ENCODE measurements at regions of chr20 and their contacts with region 1.

Region 1: DNA sequence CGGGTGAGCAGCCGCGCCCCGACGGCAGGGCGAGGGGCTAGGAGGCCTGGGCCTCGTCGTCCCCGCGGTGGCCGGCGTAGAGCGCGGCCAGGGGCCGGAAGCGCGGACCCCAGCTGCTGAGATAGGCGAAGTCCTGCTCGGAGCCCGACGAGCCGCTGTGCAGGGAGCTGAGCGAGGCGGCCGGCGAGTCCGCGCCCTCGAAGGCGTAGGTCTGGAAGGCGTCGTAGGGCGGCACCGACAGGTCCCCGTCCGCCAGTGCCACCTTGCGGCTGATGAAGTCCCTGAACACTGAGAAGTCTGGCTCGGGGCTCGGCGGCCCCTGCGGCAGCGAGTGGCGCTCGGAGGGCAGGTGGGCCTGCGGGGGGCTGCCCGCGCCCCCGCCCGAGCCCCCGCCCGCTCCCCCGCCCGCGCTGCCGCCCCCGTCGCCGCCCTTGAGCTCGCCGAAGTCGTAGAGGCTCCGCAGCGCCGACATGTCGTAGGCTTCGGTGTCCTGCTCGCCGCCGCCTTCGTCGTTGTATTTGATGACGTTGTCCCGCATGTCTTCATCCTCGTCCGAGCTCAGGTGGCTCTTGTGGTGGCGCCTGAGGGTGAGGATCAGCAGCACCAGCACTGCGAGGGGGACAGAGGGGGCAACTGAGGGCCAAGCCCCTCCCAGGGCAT is 56.5 kb downstream of the CD40 start:
- DNase-seq: peak; percentile 44
- H3K4me3 ChIP-seq: no peak overlapping the region
- H3K27ac ChIP-seq: no peak overlapping the region
- H3K4me1 ChIP-seq: no peaks in the 10 kb centered on the region
- H3K27me3 ChIP-seq: peaks cover 18 to 33% of the 10 kb centered on the region in 2 experiments
- CTCF ChIP-seq: peak; percentile 50 to 85
- POLR2A ChIP-seq: no peak

Region 2: DNA sequence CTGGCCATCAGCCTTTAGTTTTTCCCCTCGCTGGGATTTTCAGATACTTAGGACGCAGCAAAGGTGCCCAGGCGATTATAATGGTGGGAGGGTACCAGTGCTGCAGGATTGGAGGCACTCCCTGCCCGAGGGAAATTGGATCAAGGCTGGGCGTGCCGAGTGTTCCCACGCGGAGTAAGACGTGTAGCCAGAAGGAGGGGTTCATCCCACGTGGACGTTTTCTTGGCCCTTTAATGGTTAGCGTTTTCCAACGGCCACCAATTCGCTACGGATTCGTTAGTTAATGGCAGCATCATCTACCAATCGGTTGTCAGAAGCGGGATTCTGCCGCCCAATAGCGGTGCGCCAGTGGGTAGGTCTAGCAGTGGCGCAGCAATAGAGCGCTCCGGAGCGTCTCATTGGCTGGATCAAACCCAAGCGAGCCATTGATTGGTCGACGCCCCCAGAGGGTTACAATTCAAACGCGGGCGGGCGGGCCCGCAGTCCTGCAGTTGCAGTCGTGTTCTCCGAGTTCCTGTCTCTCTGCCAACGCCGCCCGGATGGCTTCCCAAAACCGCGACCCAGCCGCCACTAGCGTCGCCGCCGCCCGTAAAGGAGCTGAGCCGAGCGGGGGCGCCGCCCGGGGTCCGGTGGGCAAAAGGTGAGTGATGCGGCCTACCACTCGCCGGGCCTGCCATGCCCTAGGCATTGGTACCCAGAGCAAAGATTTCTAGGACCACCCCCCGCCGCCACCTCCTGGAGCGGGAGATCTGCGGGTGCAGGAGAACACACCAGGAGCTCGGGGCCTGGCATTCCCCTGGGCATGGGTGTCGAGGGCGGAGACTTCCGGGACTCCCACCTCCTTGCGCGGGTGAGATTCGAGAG is 362.2 kb before region 1 on chr20 and contains the start of gene UBE2C:
- CTCF ChIA-PET with region 1: no interaction called
- POLR2A ChIA-PET with region 1: no interaction called
- dilution Hi-C with region 1: no loop called
- intact Hi-C with region 1: no loop called
- DNase-seq: peak; percentile 100
- H3K4me3 ChIP-seq: peak within 1 kb of the TSS; percentile 59 to 96 (median 90)
- H3K27ac ChIP-seq: peak within 1 kb of the TSS; percentile 41
- H3K4me1 ChIP-seq: peaks cover 16% of the 10 kb centered on the region
- H3K27me3 ChIP-seq: no peaks in the 10 kb centered on the region
- CTCF ChIP-seq: no peak
- POLR2A ChIP-seq: peak; percentile 50
- total RNA-seq, gene UBE2C: 108 and 129 TPM in 2 replicates

Region 3: DNA sequence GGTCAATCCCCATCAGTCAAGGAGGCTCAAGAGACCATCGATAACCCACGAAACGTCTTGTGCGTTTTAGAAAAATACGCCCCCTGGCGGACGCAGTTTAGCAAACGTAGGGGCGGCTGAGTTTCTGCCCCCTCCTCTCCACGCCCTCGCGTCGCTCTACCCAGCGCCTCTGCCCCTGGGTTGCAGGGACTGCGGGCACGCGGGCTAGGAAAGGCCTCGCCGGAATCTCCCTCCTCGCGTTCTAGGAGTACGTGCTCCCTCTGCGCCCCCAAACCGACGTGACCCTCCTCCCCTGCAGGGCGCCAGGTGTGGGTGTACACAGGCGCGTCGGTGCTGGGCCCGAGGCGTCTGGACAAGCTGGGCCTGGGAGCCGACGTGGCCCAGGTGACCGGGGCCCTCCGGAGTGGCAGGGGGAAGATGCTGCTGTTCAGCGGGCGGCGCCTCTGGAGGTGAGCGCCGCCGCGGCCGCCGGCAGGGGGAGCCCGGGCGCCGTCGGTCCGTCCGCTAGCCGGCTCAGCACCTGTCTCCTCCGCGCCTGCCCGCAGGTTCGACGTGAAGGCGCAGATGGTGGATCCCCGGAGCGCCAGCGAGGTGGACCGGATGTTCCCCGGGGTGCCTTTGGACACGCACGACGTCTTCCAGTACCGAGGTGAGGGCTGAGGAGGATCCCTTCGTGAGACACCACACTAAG is 160.6 kb before region 1 on chr20:
- CTCF ChIA-PET with region 1: interaction called, 43 read pairs
- POLR2A ChIA-PET with region 1: no interaction called
- dilution Hi-C with region 1: no loop called
- intact Hi-C with region 1: loop called (anchors 2 kb)
- DNase-seq: peak; percentile 31
- H3K4me3 ChIP-seq: no peak overlapping the region
- H3K27ac ChIP-seq: no peak overlapping the region
- H3K4me1 ChIP-seq: no peaks in the 10 kb centered on the region
- H3K27me3 ChIP-seq: peaks cover 39 to 46% of the 10 kb centered on the region in 2 experiments
- CTCF ChIP-seq: peak; percentile 74 to 85
- POLR2A ChIP-seq: no peak

Region 4: GRCh38 chr20:46022411-46023147 is 152.0 kb before region 1 on chr20:
- CTCF ChIA-PET with region 1: interaction called, 34 read pairs
- POLR2A ChIA-PET with region 1: no interaction called
- dilution Hi-C with region 1: no loop called
- intact Hi-C with region 1: loop called (anchors 1 kb)
- DNase-seq: no peak
- H3K4me3 ChIP-seq: no peak overlapping the region
- H3K27ac ChIP-seq: no peak overlapping the region
- H3K4me1 ChIP-seq: no peaks in the 10 kb centered on the region
- H3K27me3 ChIP-seq: peaks cover 10 to 22% of the 10 kb centered on the region in 2 experiments
- CTCF ChIP-seq: peak; percentile 53 to 77
- POLR2A ChIP-seq: no peak

Region 5: DNA sequence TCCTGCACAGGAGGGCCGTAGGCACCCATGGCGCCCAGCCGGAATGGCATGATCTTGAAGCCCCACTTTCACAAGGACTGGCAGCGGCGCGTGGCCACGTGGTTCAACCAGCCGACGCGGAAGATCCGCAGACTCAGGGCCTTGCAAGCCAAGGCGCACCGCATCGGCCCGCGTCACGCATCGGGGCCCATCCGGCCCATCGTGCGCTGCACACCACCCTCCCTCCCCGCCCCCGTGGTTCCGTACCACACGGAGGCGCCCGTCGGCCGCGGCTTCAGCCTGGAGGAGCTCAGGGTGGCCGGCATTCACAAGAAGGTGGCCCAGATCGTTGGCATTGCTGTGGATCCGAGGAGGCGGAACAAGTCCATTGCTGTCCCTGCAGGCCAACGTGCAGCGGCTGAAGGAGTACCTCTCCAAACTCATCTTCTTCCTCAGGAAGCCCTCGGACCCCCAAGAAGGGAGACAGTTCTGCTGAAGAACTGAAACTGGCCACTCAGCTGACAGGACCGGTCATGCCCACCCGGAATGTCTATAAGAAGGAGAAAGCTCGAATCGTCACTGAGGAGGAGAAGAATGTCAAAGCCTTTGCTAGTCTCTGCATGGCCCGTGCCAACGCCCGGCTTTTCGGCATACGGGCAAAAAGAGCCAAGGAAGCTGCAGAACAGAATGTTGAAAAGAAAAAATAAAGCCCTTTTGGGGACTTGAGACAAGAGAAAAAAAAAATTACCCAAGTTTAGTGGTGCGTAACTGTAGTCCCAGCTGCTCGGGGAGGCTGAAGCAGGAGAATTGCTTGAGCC is 74.9 kb before region 1 on chr20:
- CTCF ChIA-PET with region 1: interaction called, 19 read pairs
- POLR2A ChIA-PET with region 1: no interaction called
- dilution Hi-C with region 1: no loop called
- intact Hi-C with region 1: no loop called
- DNase-seq: peak; percentile 19
- H3K4me3 ChIP-seq: no peak overlapping the region
- H3K27ac ChIP-seq: no peak overlapping the region
- H3K4me1 ChIP-seq: no peaks in the 10 kb centered on the region
- H3K27me3 ChIP-seq: peaks cover 21 to 48% of the 10 kb centered on the region in 2 experiments
- CTCF ChIP-seq: peak in 1 of 2 donors; percentile 31
- POLR2A ChIP-seq: no peak

Measured in endothelial cell of umbilical vein (primary cell).